HepG2 (cell line): ENCODE measurements at regions of chr1 and their contacts with region 1.

Region 1: GRCh38 chr1:1826356-1827088 is 48.3 kb upstream of the NADK start:
- DNase-seq: no peak
- ATAC-seq: no peak
- H3K4me3 ChIP-seq: no peak overlapping the region
- H3K27ac ChIP-seq: no peak overlapping the region
- H3K4me1 ChIP-seq: no peaks in the 10 kb centered on the region
- H3K27me3 ChIP-seq: no peaks in the 10 kb centered on the region
- CTCF ChIP-seq: no peak
- EP300 ChIP-seq: no peak
- POLR2A ChIP-seq: no peak
- RAD21 ChIP-seq: no peak

Region 2: DNA sequence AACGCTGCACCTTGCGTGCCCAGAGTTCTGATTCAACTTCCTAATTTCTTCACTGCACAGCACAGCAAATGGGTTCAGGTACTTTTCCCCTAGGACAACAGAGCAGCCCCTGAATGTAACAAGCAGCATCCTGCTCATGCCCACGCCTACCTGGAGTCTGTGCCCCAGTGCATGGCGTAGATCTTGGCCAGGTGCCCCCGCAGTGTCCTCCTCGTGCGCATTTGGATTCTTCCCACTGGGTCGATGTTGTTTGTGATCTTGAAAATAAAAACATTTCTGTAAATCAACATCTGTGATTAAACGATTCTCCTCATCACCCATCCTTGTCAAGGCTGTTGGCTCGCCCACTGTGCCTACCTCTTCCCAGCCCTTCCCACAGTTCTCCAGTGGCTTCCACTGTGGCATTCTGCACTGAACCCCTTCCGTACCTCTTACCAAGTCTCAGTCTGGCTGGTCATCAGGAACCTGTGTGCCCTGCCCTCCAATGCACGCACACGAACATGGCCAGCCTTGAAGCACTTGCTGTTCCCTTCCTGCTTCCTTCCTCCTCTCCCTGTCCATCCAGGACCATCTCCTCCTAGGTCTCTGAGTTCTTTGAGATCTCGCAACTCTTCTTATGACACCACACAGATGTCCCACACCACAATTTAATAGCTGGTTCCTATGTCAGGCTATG is 10.8 kb before region 1 on chr1:
- CTCF ChIA-PET with region 1: no interaction called
- POLR2A ChIA-PET with region 1: no interaction called
- in situ Hi-C with region 1: no loop called
- intact Hi-C with region 1: no loop called
- DNase-seq: no peak
- ATAC-seq: no peak
- H3K4me3 ChIP-seq: no peak overlapping the region
- H3K27ac ChIP-seq: no peak overlapping the region
- H3K4me1 ChIP-seq: no peaks in the 10 kb centered on the region
- H3K27me3 ChIP-seq: no peaks in the 10 kb centered on the region
- CTCF ChIP-seq: no peak
- EP300 ChIP-seq: no peak
- POLR2A ChIP-seq: no peak; a peak in 1 of 4 replicates
- RAD21 ChIP-seq: no peak

Region 3: GRCh38 chr1:1858382-1859086 is 32.0 kb after region 1 on chr1:
- CTCF ChIA-PET with region 1: no interaction called
- POLR2A ChIA-PET with region 1: no interaction called
- in situ Hi-C with region 1: no loop called
- intact Hi-C with region 1: loop called (anchors 1 kb)
- DNase-seq: peak; percentile 62
- ATAC-seq: peak; percentile 10; the same call in 1 of the 3 replicates
- H3K4me3 ChIP-seq: no peak overlapping the region
- H3K27ac ChIP-seq: peak overlapping the region; percentile 53
- H3K4me1 ChIP-seq: peaks cover 81% of the 10 kb centered on the region
- H3K27me3 ChIP-seq: no peaks in the 10 kb centered on the region
- CTCF ChIP-seq: peak; percentile 61
- EP300 ChIP-seq: no peak
- POLR2A ChIP-seq: no peak
- RAD21 ChIP-seq: no peak